ENCODE measurements at regions of chr9 and their contacts with region 1.

Region 1: GRCh38 chr9:21549251-21549765 is 67.2 kb upstream of the IFNE start:
- DNase-seq: peak; percentile 27
- H3K4me3 Mint-ChIP-seq: peak overlapping the region; percentile 83
- H3K27ac Mint-ChIP-seq: peak overlapping the region; percentile 96
- H3K4me1 Mint-ChIP-seq: peaks cover 41% of the 10 kb centered on the region
- H3K27me3 Mint-ChIP-seq: no peaks in the 10 kb centered on the region
- CTCF ChIP-seq: no peak

Region 2: DNA sequence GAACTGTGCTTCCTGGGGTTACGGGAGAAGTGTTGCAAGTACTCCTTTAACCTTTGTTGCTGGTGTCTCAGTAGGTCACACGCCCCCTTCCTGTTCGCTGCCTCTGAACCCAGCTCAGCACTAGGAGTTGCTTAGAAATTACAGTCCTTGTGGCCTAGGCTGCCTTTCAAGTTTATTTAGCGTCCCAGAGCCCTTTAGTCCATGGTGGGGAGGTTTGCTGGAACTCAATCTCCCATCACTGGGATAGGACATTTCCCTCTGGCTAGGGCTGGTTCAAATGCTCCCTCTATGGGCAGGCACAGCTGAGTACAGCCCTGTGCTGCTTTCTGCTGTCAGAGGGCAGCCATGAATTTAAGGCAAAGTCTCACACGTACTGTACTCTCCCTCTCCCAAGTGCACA is 135.7 kb before region 1 on chr9:
- CTCF ChIA-PET with region 1: no interaction called
- intact Hi-C with region 1: no loop called
- DNase-seq: no peak
- H3K4me3 Mint-ChIP-seq: no peak overlapping the region
- H3K27ac Mint-ChIP-seq: no peak overlapping the region
- H3K4me1 Mint-ChIP-seq: peaks cover 37% of the 10 kb centered on the region
- H3K27me3 Mint-ChIP-seq: no peaks in the 10 kb centered on the region
- CTCF ChIP-seq: peak; percentile 10

Region 3: DNA sequence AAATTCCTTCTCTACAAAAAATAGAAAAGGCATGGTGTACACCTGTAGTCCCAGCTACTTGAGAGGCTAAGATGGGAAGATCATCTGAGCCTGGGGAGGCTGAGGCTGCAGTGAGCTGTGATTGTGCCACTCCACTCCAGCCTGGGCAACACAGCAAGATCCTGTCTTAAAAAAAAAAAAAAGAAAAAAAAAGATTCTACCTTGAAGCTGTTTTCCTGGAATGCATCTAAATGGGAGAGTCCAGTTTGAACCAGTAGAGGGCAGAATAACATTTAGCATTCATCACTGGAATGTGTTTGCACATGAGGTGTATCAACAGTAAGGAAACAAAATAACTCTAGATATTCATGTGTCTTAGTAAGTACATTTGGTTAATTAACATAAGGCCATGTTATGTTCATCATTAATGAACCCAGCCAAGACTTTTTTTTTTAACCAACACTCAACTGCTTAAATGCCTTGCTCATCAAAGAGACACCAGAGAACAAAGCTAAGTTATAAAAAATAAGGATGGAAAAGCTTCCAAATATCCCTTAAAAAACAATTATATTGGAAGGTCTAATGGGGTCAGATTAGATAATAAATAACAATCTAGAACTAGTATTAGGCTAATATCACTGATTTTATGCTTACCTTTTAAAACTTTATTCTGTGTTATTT is 83.3 kb before region 1 on chr9:
- CTCF ChIA-PET with region 1: no interaction called
- intact Hi-C with region 1: loop called (anchors 5 kb)
- DNase-seq: peak; percentile 15
- H3K4me3 Mint-ChIP-seq: no peak overlapping the region
- H3K27ac Mint-ChIP-seq: no peak overlapping the region
- H3K4me1 Mint-ChIP-seq: no peaks in the 10 kb centered on the region
- H3K27me3 Mint-ChIP-seq: no peaks in the 10 kb centered on the region
- CTCF ChIP-seq: peak; percentile 39

Region 4: DNA sequence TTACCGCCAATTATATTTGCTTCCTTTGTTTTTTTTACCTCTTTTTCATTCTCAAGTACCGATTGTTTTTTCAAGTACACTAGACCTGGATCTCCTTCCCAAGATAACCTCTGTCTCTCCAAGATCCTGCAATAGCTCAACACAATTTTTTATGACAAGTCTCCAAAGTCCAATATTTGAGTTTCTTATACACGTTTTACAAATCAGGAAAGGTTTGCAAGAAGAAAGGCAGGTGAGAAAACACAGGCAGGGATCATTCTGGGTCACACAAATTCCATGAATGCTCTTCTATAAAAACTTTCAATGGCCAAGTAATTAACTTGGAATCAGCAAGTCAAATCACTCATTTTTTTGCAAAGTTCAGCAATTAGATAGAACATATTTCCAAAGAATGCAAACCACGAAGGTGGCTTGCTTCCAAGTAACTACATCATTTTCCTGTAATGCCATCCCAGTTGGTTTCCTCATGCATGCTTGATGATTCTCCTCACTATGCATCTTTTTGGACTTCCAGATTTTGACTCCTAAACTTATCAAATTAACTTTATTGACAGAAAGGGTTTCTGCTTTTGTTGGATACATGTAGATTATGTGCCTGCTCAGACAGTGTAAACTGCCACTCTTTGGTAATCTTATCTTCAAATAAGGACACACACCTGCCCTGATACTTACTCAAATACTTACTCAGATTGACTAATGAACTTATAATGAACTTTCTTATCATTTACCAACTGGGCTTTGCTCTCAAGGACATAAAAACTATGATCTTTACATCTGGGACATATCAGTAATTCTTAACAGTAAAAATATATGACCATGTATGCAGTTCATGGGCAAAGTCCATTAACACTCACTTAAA is 42.5 kb before region 1 on chr9:
- CTCF ChIA-PET with region 1: no interaction called
- intact Hi-C with region 1: loop called (anchors 5 kb)
- DNase-seq: peak; percentile 31
- H3K4me3 Mint-ChIP-seq: peak overlapping the region; percentile 24
- H3K27ac Mint-ChIP-seq: peak overlapping the region; percentile 84
- H3K4me1 Mint-ChIP-seq: peaks cover 7% of the 10 kb centered on the region
- H3K27me3 Mint-ChIP-seq: no peaks in the 10 kb centered on the region
- CTCF ChIP-seq: no peak

Region 5: GRCh38 chr9:21527579-21527978 is 21.7 kb before region 1 on chr9:
- CTCF ChIA-PET with region 1: no interaction called
- intact Hi-C with region 1: no loop called
- DNase-seq: no peak
- H3K4me3 Mint-ChIP-seq: no peak overlapping the region
- H3K27ac Mint-ChIP-seq: peak overlapping the region; percentile 83
- H3K4me1 Mint-ChIP-seq: no peaks in the 10 kb centered on the region
- H3K27me3 Mint-ChIP-seq: no peaks in the 10 kb centered on the region
- CTCF ChIP-seq: no peak

Region 6: DNA sequence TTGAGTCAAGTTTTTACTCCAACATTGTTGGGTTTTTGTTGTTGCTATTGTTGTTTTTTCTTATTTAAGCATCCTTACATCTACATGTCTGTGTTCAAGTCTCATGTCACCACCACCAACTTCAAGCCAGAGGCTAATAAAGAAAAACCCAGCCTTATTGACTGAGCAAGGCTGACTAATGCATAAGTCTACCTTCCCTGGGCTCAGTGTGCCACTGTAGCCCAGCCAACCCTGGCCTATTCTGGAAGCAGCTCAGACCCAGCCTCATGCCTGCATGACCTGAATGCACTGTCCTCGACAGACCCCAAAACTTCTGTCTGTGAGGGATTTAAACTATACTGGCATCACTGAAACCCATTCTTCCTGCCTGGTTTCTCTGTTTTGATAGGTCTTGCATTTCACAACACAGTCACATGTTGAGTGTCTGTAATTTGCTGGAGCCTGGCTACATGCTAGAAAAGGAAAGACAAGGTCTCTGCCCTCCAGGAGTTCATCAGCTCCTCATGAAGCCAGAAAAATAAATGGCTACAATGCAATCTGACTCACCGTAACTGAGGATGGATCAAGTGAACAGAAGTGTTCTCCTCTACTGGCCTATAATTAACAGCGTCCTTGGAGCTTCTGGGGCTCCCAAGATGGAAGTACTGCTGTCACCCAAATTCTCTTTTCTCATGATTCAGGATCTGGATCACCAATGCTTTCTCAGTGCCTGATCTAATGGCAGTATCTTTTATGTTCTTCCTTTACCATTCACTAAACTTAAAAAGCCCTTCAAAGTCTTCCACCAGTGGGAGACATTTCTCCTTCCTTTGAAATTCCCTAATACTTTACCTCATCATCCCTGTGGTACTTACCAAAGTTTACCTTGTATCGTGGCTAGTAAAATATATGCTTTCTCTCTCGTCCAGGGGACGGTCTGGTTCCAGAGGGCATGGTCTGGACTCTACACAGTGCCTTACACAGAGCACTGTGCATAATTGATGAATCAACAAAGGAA is 36.7 kb after region 1 on chr9:
- CTCF ChIA-PET with region 1: no interaction called
- intact Hi-C with region 1: loop called (anchors 5 kb)
- DNase-seq: no peak
- H3K4me3 Mint-ChIP-seq: peak overlapping the region; percentile 62
- H3K27ac Mint-ChIP-seq: peak overlapping the region; percentile 93
- H3K4me1 Mint-ChIP-seq: peaks cover 51% of the 10 kb centered on the region
- H3K27me3 Mint-ChIP-seq: no peaks in the 10 kb centered on the region
- CTCF ChIP-seq: no peak

Measured in Calu3 (cell line).